Calu3 (cell line): ENCODE measurements at regions of chr10 and their contacts with region 1.

Region 1: GRCh38 chr10:26556748-26557640 is 118.9 kb downstream of the APBB1IP start:
- DNase-seq: peak; percentile 44
- H3K4me3 Mint-ChIP-seq: peak overlapping the region; percentile 6
- H3K27ac Mint-ChIP-seq: no peak overlapping the region
- H3K4me1 Mint-ChIP-seq: peaks cover 20% of the 10 kb centered on the region
- H3K27me3 Mint-ChIP-seq: no peaks in the 10 kb centered on the region
- CTCF ChIP-seq: peak; percentile 65

Region 2: GRCh38 chr10:25725918-25726716 is 830.9 kb before region 1 on chr10:
- CTCF ChIA-PET with region 1: interaction called, 4 read pairs
- intact Hi-C with region 1: loop called (anchors 1 kb)
- DNase-seq: peak; percentile 46
- H3K4me3 Mint-ChIP-seq: no peak overlapping the region
- H3K27ac Mint-ChIP-seq: no peak overlapping the region
- H3K4me1 Mint-ChIP-seq: no peaks in the 10 kb centered on the region
- H3K27me3 Mint-ChIP-seq: peaks cover 59% of the 10 kb centered on the region
- CTCF ChIP-seq: no peak

Region 3: GRCh38 chr10:25875556-25876165 is 681.3 kb before region 1 on chr10:
- CTCF ChIA-PET with region 1: no interaction called
- intact Hi-C with region 1: loop called (anchors 1 kb)
- DNase-seq: peak; percentile 78
- H3K4me3 Mint-ChIP-seq: no peak overlapping the region
- H3K27ac Mint-ChIP-seq: no peak overlapping the region
- H3K4me1 Mint-ChIP-seq: no peaks in the 10 kb centered on the region
- H3K27me3 Mint-ChIP-seq: peaks cover 16% of the 10 kb centered on the region
- CTCF ChIP-seq: peak; percentile 82

Region 4: DNA sequence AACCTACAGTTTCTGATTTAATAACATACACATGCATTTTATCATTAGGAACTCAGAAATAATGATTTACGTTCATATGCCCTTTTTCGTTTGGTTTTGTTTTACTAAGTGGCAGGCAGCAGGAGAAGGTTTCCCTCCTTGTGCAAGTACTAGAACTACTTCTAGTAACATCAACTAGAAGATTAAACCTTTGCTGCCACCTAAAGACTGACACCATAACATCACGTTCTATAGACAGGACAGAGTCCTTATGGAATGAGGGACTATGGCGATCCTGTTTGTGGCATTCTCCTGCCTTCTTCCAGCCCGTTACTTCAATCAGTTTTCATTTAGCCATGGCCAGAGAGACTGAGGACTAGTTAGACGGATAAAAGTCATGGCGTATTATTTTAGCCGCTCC is 287.2 kb before region 1 on chr10:
- CTCF ChIA-PET with region 1: no interaction called
- intact Hi-C with region 1: loop called (anchors 5 kb)
- DNase-seq: peak; percentile 24
- H3K4me3 Mint-ChIP-seq: no peak overlapping the region
- H3K27ac Mint-ChIP-seq: no peak overlapping the region
- H3K4me1 Mint-ChIP-seq: no peaks in the 10 kb centered on the region
- H3K27me3 Mint-ChIP-seq: peaks cover 19% of the 10 kb centered on the region
- CTCF ChIP-seq: peak; percentile 31

Region 5: GRCh38 chr10:26334932-26335573 is 221.9 kb before region 1 on chr10:
- CTCF ChIA-PET with region 1: interaction called, 35 read pairs
- intact Hi-C with region 1: loop called (anchors 1 kb)
- DNase-seq: peak; percentile 56
- H3K4me3 Mint-ChIP-seq: peak overlapping the region; percentile 62
- H3K27ac Mint-ChIP-seq: no peak overlapping the region
- H3K4me1 Mint-ChIP-seq: peaks cover 21% of the 10 kb centered on the region
- H3K27me3 Mint-ChIP-seq: no peaks in the 10 kb centered on the region
- CTCF ChIP-seq: peak; percentile 85